ENCODE measurements at regions of chr2 and their contacts with region 1.

Region 1: GRCh38 chr2:32627814-32628579 is at the start of gene TTC27:
- DNase-seq: peak; percentile 96
- H3K4me3 ChIP-seq: peak within 1 kb of the TSS; percentile 92 to 98 (median 98)
- H3K27ac ChIP-seq: peak within 1 kb of the TSS; percentile 46
- H3K4me1 ChIP-seq: peaks cover 5% of the 10 kb centered on the region
- H3K27me3 ChIP-seq: no peaks in the 10 kb centered on the region
- CTCF ChIP-seq: no peak
- POLR2A ChIP-seq: peak; percentile 91
- total RNA-seq, gene TTC27: 20.1 and 20.6 TPM in 2 replicates

Region 2: GRCh38 chr2:32572737-32573136 is 55.3 kb before region 1 on chr2:
- CTCF ChIA-PET with region 1: no interaction called
- POLR2A ChIA-PET with region 1: no interaction called
- dilution Hi-C with region 1: no loop called
- intact Hi-C with region 1: no loop called
- DNase-seq: no peak
- H3K4me3 ChIP-seq: no peak overlapping the region
- H3K27ac ChIP-seq: no peak overlapping the region
- H3K4me1 ChIP-seq: no peaks in the 10 kb centered on the region
- H3K27me3 ChIP-seq: no peaks in the 10 kb centered on the region
- CTCF ChIP-seq: no peak
- POLR2A ChIP-seq: no peak

Region 3: GRCh38 chr2:32683520-32684086 is 55.6 kb after region 1 on chr2:
- CTCF ChIA-PET with region 1: interaction called, 3 read pairs
- POLR2A ChIA-PET with region 1: no interaction called
- dilution Hi-C with region 1: no loop called
- intact Hi-C with region 1: loop called (anchors 1 kb)
- DNase-seq: peak; percentile 93
- H3K4me3 ChIP-seq: peak overlapping the region in 1 of 3 experiments; percentile 8
- H3K27ac ChIP-seq: peak overlapping the region; percentile 65
- H3K4me1 ChIP-seq: peaks cover 23% of the 10 kb centered on the region
- H3K27me3 ChIP-seq: no peaks in the 10 kb centered on the region
- CTCF ChIP-seq: no peak
- POLR2A ChIP-seq: peak; percentile 69

Region 4: GRCh38 chr2:32805104-32805766 is 177.2 kb after region 1 on chr2:
- CTCF ChIA-PET with region 1: no interaction called
- POLR2A ChIA-PET with region 1: no interaction called
- dilution Hi-C with region 1: no loop called
- intact Hi-C with region 1: no loop called
- DNase-seq: peak; percentile 84
- H3K4me3 ChIP-seq: no peak overlapping the region
- H3K27ac ChIP-seq: peak overlapping the region; percentile 65
- H3K4me1 ChIP-seq: peaks cover 16% of the 10 kb centered on the region
- H3K27me3 ChIP-seq: no peaks in the 10 kb centered on the region
- CTCF ChIP-seq: no peak
- POLR2A ChIP-seq: no peak